ENCODE measurements at regions of chr2 and their contacts with region 1.

Region 1: GRCh38 chr2:119430023-119430498 is 1.6 kb upstream of the TMEM37 start:
- DNase-seq: no peak
- H3K4me3 ChIP-seq: no peak overlapping the region
- H3K27ac ChIP-seq: no peak overlapping the region
- H3K4me1 ChIP-seq: peaks cover 17% of the 10 kb centered on the region
- CTCF ChIP-seq: no peak

Region 2: DNA sequence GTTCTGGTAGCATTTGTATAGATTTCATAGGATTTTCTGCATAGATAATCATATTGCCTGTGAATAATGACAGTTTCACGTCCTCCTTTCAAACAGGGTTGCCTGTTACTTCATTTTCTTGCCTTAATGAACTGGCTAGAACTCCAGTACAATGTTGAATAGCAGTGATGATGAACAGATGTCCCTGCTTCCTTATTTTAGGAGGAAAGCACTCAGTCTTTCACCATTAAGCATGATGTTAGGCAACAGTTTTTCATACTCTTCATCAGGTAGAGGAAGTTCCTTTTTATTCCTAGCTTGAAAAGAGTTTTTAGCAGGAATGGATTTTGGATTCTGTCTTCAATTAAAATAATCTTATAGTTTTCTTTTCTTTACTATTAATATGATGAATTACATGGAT is 103.1 kb before region 1 on chr2:
- CTCF ChIA-PET with region 1: no interaction called
- POLR2A ChIA-PET with region 1: interaction called, 10 read pairs
- intact Hi-C with region 1: no loop called
- DNase-seq: peak; percentile 18
- H3K4me3 ChIP-seq: no peak overlapping the region
- H3K27ac ChIP-seq: no peak overlapping the region
- H3K4me1 ChIP-seq: no peaks in the 10 kb centered on the region
- CTCF ChIP-seq: no peak

Region 3: DNA sequence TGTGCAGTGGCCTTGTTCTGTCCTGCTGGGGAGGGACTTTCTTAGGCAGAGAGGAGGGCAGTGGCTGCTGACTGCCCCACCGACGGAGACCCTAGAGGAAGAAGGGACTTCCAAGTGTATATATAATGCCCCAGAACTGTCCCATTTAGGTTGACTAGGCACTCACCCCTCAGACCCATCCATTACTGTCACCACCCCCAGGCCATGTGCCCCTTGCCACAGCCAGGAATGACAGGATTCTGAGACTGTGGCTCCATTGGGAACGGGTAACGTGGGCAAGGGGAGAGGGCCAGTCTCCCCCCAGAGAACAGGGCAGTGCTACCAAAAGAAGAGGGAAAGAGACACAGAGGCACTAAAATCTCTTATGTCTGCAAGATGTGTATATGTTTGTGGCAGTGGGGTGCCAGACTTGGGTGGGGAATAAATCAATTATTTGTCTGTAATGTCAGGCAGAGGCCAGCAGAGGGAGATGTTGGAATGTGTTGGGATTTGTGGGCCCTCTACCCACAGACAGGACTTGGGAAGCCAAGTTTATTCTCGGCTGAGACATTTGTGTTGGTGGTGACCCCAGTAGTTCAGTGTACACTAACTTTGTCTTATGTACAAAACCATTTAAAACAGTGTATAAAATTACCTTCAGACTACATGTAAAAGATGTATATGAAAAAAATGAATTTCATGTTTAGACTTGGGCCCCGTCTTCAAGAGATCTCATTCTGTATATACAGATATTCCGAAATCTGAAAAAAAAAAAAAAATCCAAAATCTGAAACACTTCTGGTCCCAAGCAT is 22.4 kb before region 1 on chr2:
- CTCF ChIA-PET with region 1: no interaction called
- POLR2A ChIA-PET with region 1: no interaction called
- intact Hi-C with region 1: no loop called
- DNase-seq: peak; percentile 73
- H3K4me3 ChIP-seq: no peak overlapping the region
- H3K27ac ChIP-seq: no peak overlapping the region
- H3K4me1 ChIP-seq: peaks cover 21% of the 10 kb centered on the region
- CTCF ChIP-seq: peak; percentile 85

Measured in OCI-LY7 (cell line).